HepG2 (cell line): ENCODE measurements at regions of chr4 and their contacts with region 1.

Region 1: GRCh38 chr4:119785963-119786362 is 157.4 kb upstream of the PDE5A start:
- DNase-seq: peak; percentile 3
- ATAC-seq: no peak
- H3K4me3 ChIP-seq: no peak overlapping the region
- H3K27ac ChIP-seq: no peak overlapping the region
- H3K4me1 ChIP-seq: no peaks in the 10 kb centered on the region
- H3K27me3 ChIP-seq: no peaks in the 10 kb centered on the region
- CTCF ChIP-seq: peak; percentile 38; the same call in 1 of the 2 replicates
- EP300 ChIP-seq: no peak
- POLR2A ChIP-seq: no peak
- RAD21 ChIP-seq: no peak

Region 2: GRCh38 chr4:119559044-119559647 is 226.8 kb before region 1 on chr4:
- CTCF ChIA-PET with region 1: no interaction called
- POLR2A ChIA-PET with region 1: no interaction called
- in situ Hi-C with region 1: no loop called
- intact Hi-C with region 1: loop called (anchors 5 kb)
- DNase-seq: peak; percentile 39
- ATAC-seq: no peak; the same call in 2 of the 3 replicates
- H3K4me3 ChIP-seq: no peak overlapping the region
- H3K27ac ChIP-seq: no peak overlapping the region
- H3K4me1 ChIP-seq: no peaks in the 10 kb centered on the region
- H3K27me3 ChIP-seq: no peaks in the 10 kb centered on the region
- CTCF ChIP-seq: peak; percentile 33; the same call in 1 of the 2 replicates
- EP300 ChIP-seq: no peak
- POLR2A ChIP-seq: no peak
- RAD21 ChIP-seq: no peak

Region 3: GRCh38 chr4:119646347-119647071 is 139.5 kb before region 1 on chr4:
- CTCF ChIA-PET with region 1: no interaction called
- POLR2A ChIA-PET with region 1: no interaction called
- in situ Hi-C with region 1: no loop called
- intact Hi-C with region 1: loop called (anchors 5 kb)
- DNase-seq: no peak
- ATAC-seq: no peak
- H3K4me3 ChIP-seq: no peak overlapping the region
- H3K27ac ChIP-seq: no peak overlapping the region
- H3K4me1 ChIP-seq: peaks cover 9% of the 10 kb centered on the region
- H3K27me3 ChIP-seq: no peaks in the 10 kb centered on the region
- CTCF ChIP-seq: no peak
- EP300 ChIP-seq: no peak
- POLR2A ChIP-seq: no peak
- RAD21 ChIP-seq: no peak